Breast epithelium (tissue), 4 donors: ENCODE measurements at regions of chr1 and their contacts with region 1.

Region 1: DNA sequence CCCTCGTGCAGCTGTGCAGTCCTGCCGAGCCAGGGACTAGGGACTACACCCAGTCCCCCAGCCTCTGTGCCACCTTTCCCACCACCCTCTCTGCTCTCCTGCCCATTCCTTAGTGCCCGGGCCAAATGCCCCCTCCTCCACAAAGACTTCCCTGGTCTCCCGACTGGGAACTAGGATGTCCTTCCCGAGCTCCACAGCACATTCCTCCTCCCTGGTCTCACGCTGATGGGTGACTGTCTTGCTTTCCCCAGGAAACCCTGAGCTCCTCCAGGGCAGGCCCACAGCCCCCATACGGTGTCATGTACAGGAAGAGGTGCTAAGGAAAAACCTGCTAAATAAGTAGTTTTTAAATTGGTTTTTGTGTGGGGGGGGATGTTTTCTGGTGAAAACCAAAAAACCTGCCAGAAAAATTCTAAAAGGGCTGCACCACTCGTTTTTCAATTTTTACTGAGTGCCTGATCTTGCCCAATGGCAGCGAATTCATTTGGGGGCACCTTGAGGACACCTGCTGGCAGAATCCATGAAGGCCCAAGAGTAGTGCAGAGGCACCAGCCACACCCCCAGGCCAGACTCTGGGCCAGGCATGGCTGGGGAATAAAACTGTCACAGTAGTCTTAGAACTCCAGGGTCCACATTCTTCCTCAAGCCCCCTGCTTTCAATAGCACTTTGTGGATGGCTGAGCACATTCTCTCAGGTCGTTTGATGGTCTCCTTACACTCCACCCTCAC is 50.4 kb downstream of the GLIS1 start:
- DNase-seq: no peak
- H3K4me3 ChIP-seq: no peak overlapping the region
- H3K27ac ChIP-seq: no peak overlapping the region
- H3K4me1 ChIP-seq: no peaks in the 10 kb centered on the region
- H3K27me3 ChIP-seq: peaks cover 0 to 6% of the 10 kb centered on the region in 2 donors
- CTCF ChIP-seq: no peak
- POLR2A ChIP-seq: no peak

Region 2: GRCh38 chr1:53655931-53656746 is 32.4 kb before region 1 on chr1:
- intact Hi-C with region 1: no loop called
- DNase-seq: no peak
- H3K4me3 ChIP-seq: no peak overlapping the region
- H3K27ac ChIP-seq: no peak overlapping the region
- H3K4me1 ChIP-seq: no peaks in the 10 kb centered on the region
- H3K27me3 ChIP-seq: no peaks in the 10 kb centered on the region
- CTCF ChIP-seq: no peak
- POLR2A ChIP-seq: no peak

Region 3: GRCh38 chr1:53754484-53755312 is 66.2 kb after region 1 on chr1:
- intact Hi-C with region 1: loop called (anchors 2 kb)
- DNase-seq: no peak
- H3K4me3 ChIP-seq: no peak overlapping the region
- H3K27ac ChIP-seq: no peak overlapping the region
- H3K4me1 ChIP-seq: no peaks in the 10 kb centered on the region
- H3K27me3 ChIP-seq: no peaks in the 10 kb centered on the region
- CTCF ChIP-seq: peak in 2 of 3 donors; percentile 27 to 59
- POLR2A ChIP-seq: no peak